Sigmoid colon (tissue), 7 donors: ENCODE measurements at regions of chr1 and their contacts with region 1.

Region 1: DNA sequence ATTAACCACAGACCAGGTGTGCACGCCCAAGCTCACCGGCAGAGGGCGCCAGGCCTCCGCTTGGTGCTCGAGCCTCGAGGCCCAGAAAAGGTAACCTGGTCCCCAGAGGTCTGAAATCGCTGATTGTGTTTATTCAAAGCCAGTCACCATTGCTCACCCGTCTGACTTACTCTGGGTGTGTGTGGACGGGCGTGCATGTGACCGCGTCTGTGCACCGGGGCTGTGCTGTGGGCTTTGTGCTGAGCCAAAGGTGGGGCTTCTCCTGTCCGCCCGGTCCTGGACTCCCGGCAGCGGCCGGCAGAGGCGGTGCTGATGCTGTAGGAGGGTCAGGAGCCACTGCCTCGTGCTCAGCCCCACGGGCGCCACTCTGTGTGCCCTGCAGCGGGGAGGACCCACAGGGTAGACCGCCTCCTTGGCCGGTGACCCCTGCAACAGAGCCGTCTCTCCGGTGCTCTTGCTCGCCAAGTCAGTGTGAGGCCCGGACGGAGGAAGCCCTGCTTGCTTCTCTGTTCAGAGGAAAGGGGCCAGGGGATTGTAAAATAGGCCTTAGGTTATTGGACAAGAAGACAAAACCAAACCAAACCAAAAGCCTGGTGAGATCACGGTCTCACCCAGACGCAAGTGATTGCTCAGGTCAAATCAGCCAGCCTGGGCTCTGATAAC is 32.0 kb upstream of the BTG2 start:
- DNase-seq: peak; percentile 95
- H3K4me3 ChIP-seq: peak overlapping the region in 3 of 4 donors; percentile 19 to 31 (median 30)
- H3K27ac ChIP-seq: peak overlapping the region; percentile 86 to 98 (median 92)
- H3K4me1 ChIP-seq: peaks cover 0 to 74% (median 59%) of the 10 kb centered on the region in 4 donors
- H3K27me3 ChIP-seq: no peaks in the 10 kb centered on the region
- CTCF ChIP-seq: peak; percentile 98 to 100 (median 99)
- EP300 ChIP-seq: no peak
- POLR2A ChIP-seq: no peak

Region 2: GRCh38 chr1:203326830-203327683 is 53.7 kb after region 1 on chr1:
- intact Hi-C with region 1: loop called (anchors 1 kb)
- DNase-seq: peak; percentile 97
- H3K4me3 ChIP-seq: peak overlapping the region; percentile 29 to 57 (median 54)
- H3K27ac ChIP-seq: peak overlapping the region; percentile 87 to 95 (median 94)
- H3K4me1 ChIP-seq: peaks cover 0 to 49% (median 38%) of the 10 kb centered on the region in 4 donors
- H3K27me3 ChIP-seq: no peaks in the 10 kb centered on the region
- CTCF ChIP-seq: no peak
- EP300 ChIP-seq: no peak
- POLR2A ChIP-seq: peak; percentile 53 to 88

Region 3: GRCh38 chr1:203440771-203441170 is 167.4 kb after region 1 on chr1:
- intact Hi-C with region 1: loop called (anchors 2 kb)
- DNase-seq: peak; percentile 95
- H3K4me3 ChIP-seq: no peak overlapping the region
- H3K27ac ChIP-seq: peak overlapping the region; percentile 34 to 68 (median 53)
- H3K4me1 ChIP-seq: peaks cover 0 to 33% (median 29%) of the 10 kb centered on the region in 4 donors
- H3K27me3 ChIP-seq: no peaks in the 10 kb centered on the region
- CTCF ChIP-seq: peak; percentile 69 to 83 (median 76)
- EP300 ChIP-seq: no peak
- POLR2A ChIP-seq: no peak

Region 4: DNA sequence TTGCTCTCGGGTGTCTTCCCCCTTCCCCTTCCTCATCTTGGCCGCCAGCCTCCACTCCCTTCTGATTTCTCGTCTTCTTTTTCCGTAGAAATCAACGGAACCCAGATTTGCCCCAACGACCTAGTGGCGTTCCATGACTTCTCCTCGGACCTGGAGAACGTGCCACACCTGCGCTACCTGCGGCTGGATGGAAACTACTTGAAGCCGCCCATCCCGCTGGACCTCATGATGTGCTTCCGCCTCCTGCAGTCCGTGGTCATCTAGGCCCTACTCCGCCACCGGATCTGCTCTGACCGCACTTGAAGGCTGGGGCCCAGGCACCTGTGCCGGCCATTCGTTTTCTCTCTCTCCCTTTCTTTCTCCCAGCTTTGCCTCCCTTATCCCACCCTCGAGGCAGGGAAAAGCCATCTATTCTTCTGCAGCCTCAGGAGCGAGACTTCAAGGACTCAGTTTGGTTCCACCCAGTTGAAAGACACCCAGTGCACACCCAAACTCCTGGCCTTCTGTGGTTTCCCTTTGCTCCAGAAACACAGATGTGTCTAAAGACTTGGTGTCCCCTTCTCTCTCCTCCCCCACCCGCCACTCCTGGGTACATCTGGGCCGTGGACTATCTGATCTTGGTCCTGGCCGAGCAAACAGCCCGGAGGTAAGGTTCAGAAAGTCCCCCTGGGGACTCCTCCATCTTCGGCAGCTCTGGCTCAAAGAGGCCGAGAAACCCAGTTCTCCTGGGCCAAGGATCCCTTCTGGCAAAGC is 213.5 kb after region 1 on chr1:
- intact Hi-C with region 1: loop called (anchors 2 kb)
- DNase-seq: peak; percentile 77
- H3K4me3 ChIP-seq: peak overlapping the region in 3 of 4 donors; percentile 4 to 32 (median 24)
- H3K27ac ChIP-seq: peak overlapping the region; percentile 82 to 96 (median 89)
- H3K4me1 ChIP-seq: peaks cover 0 to 69% (median 56%) of the 10 kb centered on the region in 4 donors
- H3K27me3 ChIP-seq: no peaks in the 10 kb centered on the region
- CTCF ChIP-seq: no peak
- EP300 ChIP-seq: no peak
- POLR2A ChIP-seq: peak in 1 of 2 donors; percentile 10

Region 5: GRCh38 chr1:204411451-204412204 is 1138.3 kb after region 1 on chr1 and contains the start of gene PPP1R15B:
- intact Hi-C with region 1: loop called (anchors 5 kb)
- DNase-seq: peak; percentile 99
- H3K4me3 ChIP-seq: peak within 1 kb of the TSS; percentile 69 to 97 (median 92)
- H3K27ac ChIP-seq: peak within 1 kb of the TSS; percentile 96 to 100 (median 99)
- H3K4me1 ChIP-seq: peaks cover 0 to 46% (median 25%) of the 10 kb centered on the region in 4 donors
- H3K27me3 ChIP-seq: no peaks in the 10 kb centered on the region
- CTCF ChIP-seq: no peak
- EP300 ChIP-seq: peak in 2 of 4 donors; percentile 65 to 67
- POLR2A ChIP-seq: peak; percentile 94 to 95
- total RNA-seq, gene PPP1R15B: 40.0 to 44.7 (median 42.9) TPM